ENCODE measurements at regions of chr10 and their contacts with region 1.

Region 1: GRCh38 chr10:72215652-72216549 is at the starts of genes ANAPC16 and ASCC1:
- DNase-seq: peak; percentile 93
- H3K4me3 Mint-ChIP-seq: peak within 1 kb of the TSS; percentile 94
- H3K27ac Mint-ChIP-seq: peak within 1 kb of the TSS; percentile 99
- H3K4me1 Mint-ChIP-seq: peaks cover 32% of the 10 kb centered on the region
- H3K27me3 Mint-ChIP-seq: no peaks in the 10 kb centered on the region
- total RNA-seq, gene ANAPC16: 94.1 and 95.9 TPM in 2 replicates
- total RNA-seq, gene ASCC1: 46.2 and 49.6 TPM in 2 replicates

Region 2: DNA sequence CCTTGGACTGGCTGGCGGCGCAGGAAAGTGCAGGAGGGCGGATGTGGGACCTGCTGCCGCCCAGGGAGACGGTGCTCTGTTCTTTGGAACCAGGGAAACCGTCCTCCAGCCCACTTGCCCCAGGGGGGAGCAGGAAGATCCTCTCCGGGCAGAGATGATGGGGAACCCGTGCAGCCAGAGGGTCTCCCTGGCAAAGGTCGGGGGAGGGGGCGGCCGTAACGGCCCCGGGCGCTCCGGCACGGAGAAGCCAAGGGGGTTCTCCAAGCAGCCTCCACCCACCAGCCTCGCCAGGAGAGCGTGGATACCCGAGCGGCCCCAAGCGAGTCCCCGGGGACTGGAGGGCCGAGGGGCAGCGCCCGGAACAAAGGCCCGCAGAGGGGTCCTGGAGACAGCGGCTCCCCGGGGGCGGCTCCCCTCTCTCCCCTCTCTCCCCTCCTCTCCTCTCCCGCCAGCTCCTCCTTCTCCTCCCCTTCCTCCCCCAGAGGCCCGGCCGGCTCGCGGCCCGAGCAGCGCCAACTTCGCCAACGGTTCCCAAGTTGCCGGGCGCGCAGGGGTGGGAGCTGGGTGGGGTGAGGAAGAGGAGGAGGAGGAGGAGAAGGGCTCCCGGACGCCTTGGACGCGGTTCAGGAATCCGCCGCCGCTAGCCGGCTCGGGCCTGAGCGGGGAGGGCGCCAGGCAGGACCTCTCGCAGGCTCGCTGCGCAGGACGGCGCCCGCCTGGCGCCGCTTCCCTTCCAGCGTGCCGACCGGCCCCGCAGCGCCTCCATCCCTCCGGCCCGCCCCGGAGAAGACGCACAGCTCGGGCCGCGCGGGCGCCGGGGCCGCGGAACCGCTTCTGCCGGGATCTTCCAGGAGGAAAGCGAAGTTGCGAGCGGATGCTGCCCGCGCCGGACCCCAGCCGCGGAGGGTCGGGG is 251.9 kb before region 1 on chr10 and contains the start of gene CHST3:
- intact Hi-C with region 1: loop called (anchors 10 kb)
- DNase-seq: no peak
- H3K4me3 Mint-ChIP-seq: peak within 1 kb of the TSS; percentile 69
- H3K27ac Mint-ChIP-seq: no peak within 1 kb of the TSS
- H3K4me1 Mint-ChIP-seq: peaks cover 8% of the 10 kb centered on the region
- H3K27me3 Mint-ChIP-seq: peaks cover 55% of the 10 kb centered on the region
- total RNA-seq, gene CHST3: 0.52 and 0.62 TPM in 2 replicates

Region 3: GRCh38 chr10:72088889-72089575 is 126.9 kb before region 1 on chr10:
- intact Hi-C with region 1: loop called (anchors 2 kb)
- DNase-seq: peak; percentile 35
- H3K4me3 Mint-ChIP-seq: peak overlapping the region; percentile 99
- H3K27ac Mint-ChIP-seq: peak overlapping the region; percentile 99
- H3K4me1 Mint-ChIP-seq: peaks cover 49% of the 10 kb centered on the region
- H3K27me3 Mint-ChIP-seq: no peaks in the 10 kb centered on the region

Region 4: GRCh38 chr10:72248468-72249151 is 32.7 kb after region 1 on chr10:
- intact Hi-C with region 1: loop called (anchors 2 kb)
- DNase-seq: peak; percentile 80
- H3K4me3 Mint-ChIP-seq: peak overlapping the region; percentile 69
- H3K27ac Mint-ChIP-seq: peak overlapping the region; percentile 97
- H3K4me1 Mint-ChIP-seq: peaks cover 64% of the 10 kb centered on the region
- H3K27me3 Mint-ChIP-seq: no peaks in the 10 kb centered on the region

Region 5: DNA sequence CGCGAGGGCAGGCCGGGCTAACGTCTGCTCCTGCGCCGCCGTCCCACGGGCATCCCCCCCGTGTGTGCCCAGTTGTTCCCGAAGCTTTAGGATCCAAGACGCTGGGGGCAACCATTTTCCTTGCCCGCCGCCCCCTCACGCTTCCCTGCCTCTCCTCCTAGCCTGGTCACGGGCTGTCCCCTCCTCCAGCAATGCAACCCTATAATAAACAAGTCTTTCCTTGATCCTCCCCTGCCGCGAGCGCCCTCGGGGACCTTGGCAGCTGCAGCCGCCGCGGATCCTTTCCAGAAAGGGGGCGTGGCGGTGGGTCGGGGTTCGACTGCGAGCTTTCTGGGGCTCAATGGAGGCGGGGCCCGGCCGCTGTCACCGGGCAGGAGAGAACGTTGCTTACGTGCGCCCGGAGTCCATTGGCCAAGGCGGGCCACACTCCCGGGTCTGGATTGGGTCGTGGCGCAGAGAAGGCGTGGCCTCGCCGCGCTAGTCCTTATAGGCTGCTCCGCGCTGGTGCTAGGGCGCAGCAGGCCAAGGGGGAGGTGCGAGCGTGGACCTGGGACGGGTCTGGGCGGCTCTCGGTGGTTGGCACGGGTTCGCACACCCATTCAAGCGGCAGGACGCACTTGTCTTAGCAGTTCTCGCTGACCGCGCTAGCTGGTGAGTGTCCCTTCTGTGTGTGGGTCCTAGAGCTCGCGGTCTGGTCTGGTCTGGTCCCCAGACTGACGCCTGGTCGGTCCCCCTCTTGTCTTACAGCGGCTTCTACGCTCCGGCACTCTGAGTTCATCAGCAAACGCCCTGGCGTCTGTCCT is 57.7 kb after region 1 on chr10 and contains the start of gene DDIT4:
- intact Hi-C with region 1: loop called (anchors 2 kb)
- DNase-seq: peak; percentile 99
- H3K4me3 Mint-ChIP-seq: peak within 1 kb of the TSS; percentile 100
- H3K27ac Mint-ChIP-seq: peak within 1 kb of the TSS; percentile 94
- H3K4me1 Mint-ChIP-seq: peaks cover 43% of the 10 kb centered on the region
- H3K27me3 Mint-ChIP-seq: no peaks in the 10 kb centered on the region
- total RNA-seq, gene DDIT4: 543 and 569 TPM in 2 replicates